ENCODE measurements at regions of chr11 and their contacts with region 1.

Region 1: GRCh38 chr11:95231127-95231880 is at the start of gene SESN3:
- DNase-seq: peak; percentile 96 to 100 (median 99)
- ATAC-seq: peak; percentile 92
- H3K4me3 ChIP-seq: peak within 1 kb of the TSS; percentile 82
- H3K4me3 Mint-ChIP-seq: peak within 1 kb of the TSS in 6 of 10 donors; percentile 93 to 98 (median 96)
- H3K27ac ChIP-seq: peak within 1 kb of the TSS; percentile 77
- H3K27ac Mint-ChIP-seq: peak within 1 kb of the TSS; percentile 35 to 97 (median 90)
- H3K4me1 ChIP-seq: peaks cover 16 to 24% of the 10 kb centered on the region in 2 donors
- H3K4me1 Mint-ChIP-seq: peaks cover 37 to 71% (median 50%) of the 10 kb centered on the region in 7 donors
- H3K27me3 ChIP-seq: no peaks in the 10 kb centered on the region
- H3K27me3 Mint-ChIP-seq: peaks cover 0 to 5% (median 0%) of the 10 kb centered on the region in 5 donors
- total RNA-seq, gene SESN3: 77.5 to 262 (median 133) TPM

Region 2: GRCh38 chr11:94973099-94973968 is 258.0 kb before region 1 on chr11 and contains the starts of genes CWC15 and KDM4D:
- CTCF ChIA-PET with region 1: no interaction called
- POLR2A ChIA-PET with region 1: interaction called, 3 read pairs
- intact Hi-C with region 1: loop called (anchors 1 to 2 kb)
- DNase-seq: peak; percentile 84 to 94 (median 92)
- ATAC-seq: peak; percentile 100
- H3K4me3 ChIP-seq: peak within 1 kb of the TSS; percentile 81
- H3K4me3 Mint-ChIP-seq: peak within 1 kb of the TSS; percentile 88 to 100 (median 96)
- H3K27ac ChIP-seq: peak within 1 kb of the TSS; percentile 91
- H3K27ac Mint-ChIP-seq: peak within 1 kb of the TSS; percentile 92 to 100 (median 96)
- H3K4me1 ChIP-seq: peaks cover 9 to 13% of the 10 kb centered on the region in 2 donors
- H3K4me1 Mint-ChIP-seq: peaks cover 17 to 63% (median 39%) of the 10 kb centered on the region in 7 donors
- H3K27me3 ChIP-seq: no peaks in the 10 kb centered on the region
- H3K27me3 Mint-ChIP-seq: no peaks in the 10 kb centered on the region
- total RNA-seq, gene CWC15: 64.1 to 94.7 (median 66.8) TPM
- total RNA-seq, gene KDM4D: 0.32 to 0.70 (median 0.68) TPM

Region 3: GRCh38 chr11:95193541-95193940 is 37.8 kb before region 1 on chr11:
- CTCF ChIA-PET with region 1: interaction called, 3 read pairs
- POLR2A ChIA-PET with region 1: interaction called, 7 read pairs
- intact Hi-C with region 1: loop called in 1 of 2 experiments (anchors 5 kb)
- DNase-seq: no peak
- ATAC-seq: no peak
- H3K4me3 ChIP-seq: no peak overlapping the region
- H3K4me3 Mint-ChIP-seq: no peak overlapping the region
- H3K27ac ChIP-seq: no peak overlapping the region
- H3K27ac Mint-ChIP-seq: no peak overlapping the region
- H3K4me1 ChIP-seq: no peaks in the 10 kb centered on the region
- H3K4me1 Mint-ChIP-seq: peaks cover 11 to 66% (median 43%) of the 10 kb centered on the region in 7 donors
- H3K27me3 ChIP-seq: no peaks in the 10 kb centered on the region
- H3K27me3 Mint-ChIP-seq: no peaks in the 10 kb centered on the region

Region 4: DNA sequence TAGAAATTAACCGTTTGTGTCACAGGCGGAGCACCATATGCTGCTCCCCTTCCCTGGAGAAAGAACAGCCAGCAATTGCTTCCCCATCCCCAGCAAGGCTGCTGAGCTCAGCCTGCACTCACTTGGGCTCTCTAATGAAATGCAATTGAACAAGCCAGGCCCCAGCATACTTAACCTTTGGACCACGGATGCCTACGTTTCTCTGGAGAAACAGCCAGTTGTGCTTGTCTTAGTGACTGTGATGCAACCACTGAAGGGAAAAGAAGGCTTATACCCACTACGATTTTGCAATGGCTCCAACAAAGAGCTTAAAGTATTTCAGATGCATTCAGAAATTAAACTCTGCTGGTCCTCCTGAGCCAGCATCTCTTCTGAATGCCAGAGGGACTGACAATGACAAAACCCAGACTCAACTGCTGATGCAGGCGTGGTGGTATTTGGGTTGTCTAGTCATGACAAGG is 51.0 kb after region 1 on chr11:
- CTCF ChIA-PET with region 1: interaction called, 4 read pairs
- POLR2A ChIA-PET with region 1: interaction called, 14 read pairs
- intact Hi-C with region 1: no loop called
- DNase-seq: no peak
- ATAC-seq: no peak
- H3K4me3 ChIP-seq: no peak overlapping the region
- H3K4me3 Mint-ChIP-seq: no peak overlapping the region
- H3K27ac ChIP-seq: no peak overlapping the region
- H3K27ac Mint-ChIP-seq: no peak overlapping the region
- H3K4me1 ChIP-seq: no peaks in the 10 kb centered on the region
- H3K4me1 Mint-ChIP-seq: peaks cover 0 to 5% (median 0%) of the 10 kb centered on the region in 7 donors
- H3K27me3 ChIP-seq: no peaks in the 10 kb centered on the region
- H3K27me3 Mint-ChIP-seq: no peaks in the 10 kb centered on the region

Region 5: DNA sequence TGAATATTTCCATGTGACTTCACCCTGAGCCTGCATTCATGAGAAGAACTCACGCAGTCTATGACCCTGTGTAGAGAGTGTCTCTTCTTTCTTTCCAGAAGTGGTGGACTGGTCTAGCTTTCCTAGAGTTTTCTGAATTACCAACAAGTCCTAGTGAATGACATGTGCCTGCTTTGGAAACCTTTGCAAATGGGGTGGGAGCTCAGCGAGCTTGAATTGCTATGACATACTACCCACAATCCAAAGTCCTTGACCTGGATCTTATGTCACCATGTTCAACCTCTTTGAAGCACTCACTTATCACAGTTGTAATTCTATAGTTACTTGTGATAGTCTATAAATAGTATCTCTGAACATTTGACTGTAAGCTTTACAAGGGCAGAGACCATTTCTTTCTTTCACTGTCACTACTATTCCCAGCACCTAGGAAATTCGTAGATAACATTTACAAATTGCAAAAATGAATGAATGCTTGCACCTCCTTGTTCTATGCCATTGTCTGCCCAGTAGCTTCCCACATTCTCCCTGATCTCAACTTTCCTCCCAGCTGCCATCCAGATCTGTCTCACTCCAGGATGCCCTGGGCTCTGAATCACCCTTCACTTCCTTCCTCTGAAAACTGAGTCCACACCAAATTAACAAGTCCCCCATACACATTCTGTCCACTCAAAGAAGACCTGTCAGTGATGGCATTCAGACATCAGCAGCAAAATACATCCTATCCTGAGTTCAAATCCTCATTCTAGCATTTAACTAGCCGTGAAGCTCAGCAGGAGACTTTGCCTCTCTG is 201.6 kb after region 1 on chr11:
- CTCF ChIA-PET with region 1: no interaction called
- POLR2A ChIA-PET with region 1: interaction called, 3 read pairs
- intact Hi-C with region 1: loop called in 1 of 2 experiments (anchors 5 kb)
- DNase-seq: no peak
- ATAC-seq: no peak
- H3K4me3 ChIP-seq: no peak overlapping the region
- H3K4me3 Mint-ChIP-seq: no peak overlapping the region
- H3K27ac ChIP-seq: no peak overlapping the region
- H3K27ac Mint-ChIP-seq: no peak overlapping the region
- H3K4me1 ChIP-seq: no peaks in the 10 kb centered on the region
- H3K4me1 Mint-ChIP-seq: peaks cover 6 to 27% (median 16%) of the 10 kb centered on the region in 7 donors
- H3K27me3 ChIP-seq: no peaks in the 10 kb centered on the region
- H3K27me3 Mint-ChIP-seq: peaks cover 0 to 3% (median 0%) of the 10 kb centered on the region in 5 donors

Region 6: DNA sequence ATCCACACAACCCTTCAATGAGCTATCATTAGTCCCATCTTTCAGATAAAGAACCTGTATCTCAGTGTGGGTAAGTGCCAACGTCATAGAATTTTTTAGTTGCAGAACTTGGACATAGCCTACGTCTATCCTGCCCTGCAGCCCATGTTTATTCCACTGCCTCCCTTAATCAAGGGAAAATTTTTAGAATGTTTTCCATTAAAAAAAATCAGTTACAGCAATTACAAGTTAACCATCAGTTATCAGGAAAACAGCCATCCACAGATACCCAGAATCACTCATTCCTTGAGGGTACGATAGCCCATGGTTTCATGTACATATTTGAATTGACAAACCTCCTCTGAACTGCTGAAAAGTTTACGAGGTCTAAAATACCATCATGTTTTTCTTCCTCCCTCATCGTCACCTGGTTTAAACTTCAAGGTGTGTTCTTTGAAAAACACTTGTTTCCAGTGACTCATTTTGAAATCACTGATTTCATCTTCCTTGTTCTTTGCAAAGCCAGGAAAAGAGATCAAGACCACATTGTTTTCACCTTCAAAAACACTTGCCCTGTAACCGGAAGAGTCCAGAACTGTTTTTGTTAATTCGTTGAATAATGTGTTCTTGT is 457.4 kb after region 1 on chr11:
- CTCF ChIA-PET with region 1: interaction called, 7 read pairs
- POLR2A ChIA-PET with region 1: interaction called, 35 read pairs
- intact Hi-C with region 1: loop called in 1 of 2 experiments (anchors 1 kb)
- DNase-seq: peak in 7 of 9 donors; percentile 48 to 84 (median 70)
- ATAC-seq: peak; percentile 79
- H3K4me3 ChIP-seq: no peak overlapping the region
- H3K4me3 Mint-ChIP-seq: no peak overlapping the region
- H3K27ac ChIP-seq: peak overlapping the region; percentile 73
- H3K27ac Mint-ChIP-seq: no peak overlapping the region
- H3K4me1 ChIP-seq: peaks cover 25 to 68% of the 10 kb centered on the region in 2 donors
- H3K4me1 Mint-ChIP-seq: peaks cover 8 to 44% (median 35%) of the 10 kb centered on the region in 7 donors
- H3K27me3 ChIP-seq: no peaks in the 10 kb centered on the region
- H3K27me3 Mint-ChIP-seq: no peaks in the 10 kb centered on the region

Region 7: GRCh38 chr11:96342961-96343711 is 1111.8 kb after region 1 on chr11 and contains the start of gene MAML2:
- CTCF ChIA-PET with region 1: interaction called, 9 read pairs
- POLR2A ChIA-PET with region 1: no interaction called
- intact Hi-C with region 1: loop called in 1 of 2 experiments (anchors 2 kb)
- DNase-seq: peak; percentile 67 to 91 (median 85)
- ATAC-seq: peak; percentile 93
- H3K4me3 ChIP-seq: peak within 1 kb of the TSS; percentile 95
- H3K4me3 Mint-ChIP-seq: peak within 1 kb of the TSS; percentile 95 to 99 (median 98)
- H3K27ac ChIP-seq: peak within 1 kb of the TSS; percentile 87
- H3K27ac Mint-ChIP-seq: peak within 1 kb of the TSS; percentile 93 to 98 (median 96)
- H3K4me1 ChIP-seq: peaks cover 11 to 31% of the 10 kb centered on the region in 2 donors
- H3K4me1 Mint-ChIP-seq: peaks cover 13 to 41% (median 19%) of the 10 kb centered on the region in 7 donors
- H3K27me3 ChIP-seq: no peaks in the 10 kb centered on the region
- H3K27me3 Mint-ChIP-seq: no peaks in the 10 kb centered on the region
- total RNA-seq, gene MAML2: 15.6 to 81.3 (median 68.2) TPM